ENCODE measurements at regions of chr5 and their contacts with region 1.

Region 1: GRCh38 chr5:57117596-57117995 is 56.3 kb upstream of the GPBP1 start:
- DNase-seq: no peak
- ATAC-seq: no peak
- H3K4me3 ChIP-seq: no peak overlapping the region
- H3K27ac ChIP-seq: no peak overlapping the region
- H3K4me1 ChIP-seq: no peaks in the 10 kb centered on the region
- H3K27me3 ChIP-seq: no peaks in the 10 kb centered on the region
- CTCF ChIP-seq: no peak

Region 2: DNA sequence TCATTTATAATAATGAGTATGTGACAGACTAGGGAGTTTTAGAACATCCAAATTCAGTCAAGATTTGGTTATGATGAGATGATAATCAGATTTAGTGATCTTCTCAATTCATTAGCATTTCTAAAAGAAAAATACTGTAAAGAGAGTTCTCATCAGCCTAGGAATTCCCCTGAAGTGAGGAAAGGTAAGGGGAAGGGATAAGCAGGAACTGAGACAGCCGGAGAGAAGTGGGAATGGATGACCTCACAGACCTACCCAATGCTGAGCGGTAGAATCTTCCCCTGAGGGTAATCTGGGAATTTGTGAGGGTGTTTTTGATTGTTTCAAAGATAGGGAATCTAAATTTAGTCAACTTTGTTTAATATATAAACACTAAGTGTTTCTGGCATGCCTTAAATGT is 39.5 kb after region 1 on chr5:
- intact Hi-C with region 1: loop called in 1 of 2 experiments (anchors 1 kb)
- DNase-seq: no peak
- ATAC-seq: no peak
- H3K4me3 ChIP-seq: no peak overlapping the region
- H3K27ac ChIP-seq: no peak overlapping the region
- H3K4me1 ChIP-seq: no peaks in the 10 kb centered on the region
- H3K27me3 ChIP-seq: no peaks in the 10 kb centered on the region
- CTCF ChIP-seq: no peak